IMR-90 (cell line): ENCODE measurements at regions of chr17 and their contacts with region 1.

Region 1: DNA sequence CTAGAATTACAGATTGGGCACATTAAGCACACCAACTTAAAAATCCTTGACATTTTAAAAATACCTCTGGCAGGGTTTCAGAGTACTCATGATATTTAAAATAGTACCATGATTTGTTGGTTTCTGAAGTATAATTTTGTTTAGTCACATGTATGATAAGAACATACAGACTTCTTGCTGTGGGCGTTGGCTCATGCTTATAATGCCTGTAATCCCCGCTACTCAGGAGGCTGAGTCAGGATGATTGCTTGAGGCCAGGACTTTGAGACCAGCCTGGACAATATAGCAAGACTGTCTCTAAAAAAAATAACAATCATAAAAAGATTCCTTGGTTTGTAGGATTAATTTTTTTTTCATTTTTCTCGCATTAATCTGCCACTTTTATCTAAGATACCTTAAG is 78.5 kb downstream of the NOS2 start:
- DNase-seq: no peak
- ATAC-seq: no peak
- H3K4me3 ChIP-seq: no peak overlapping the region
- H3K27ac ChIP-seq: no peak overlapping the region
- H3K4me1 ChIP-seq: no peaks in the 10 kb centered on the region
- H3K27me3 ChIP-seq: no peaks in the 10 kb centered on the region
- CTCF ChIP-seq: no peak
- POLR2A ChIP-seq: no peak
- RAD21 ChIP-seq: no peak

Region 2: DNA sequence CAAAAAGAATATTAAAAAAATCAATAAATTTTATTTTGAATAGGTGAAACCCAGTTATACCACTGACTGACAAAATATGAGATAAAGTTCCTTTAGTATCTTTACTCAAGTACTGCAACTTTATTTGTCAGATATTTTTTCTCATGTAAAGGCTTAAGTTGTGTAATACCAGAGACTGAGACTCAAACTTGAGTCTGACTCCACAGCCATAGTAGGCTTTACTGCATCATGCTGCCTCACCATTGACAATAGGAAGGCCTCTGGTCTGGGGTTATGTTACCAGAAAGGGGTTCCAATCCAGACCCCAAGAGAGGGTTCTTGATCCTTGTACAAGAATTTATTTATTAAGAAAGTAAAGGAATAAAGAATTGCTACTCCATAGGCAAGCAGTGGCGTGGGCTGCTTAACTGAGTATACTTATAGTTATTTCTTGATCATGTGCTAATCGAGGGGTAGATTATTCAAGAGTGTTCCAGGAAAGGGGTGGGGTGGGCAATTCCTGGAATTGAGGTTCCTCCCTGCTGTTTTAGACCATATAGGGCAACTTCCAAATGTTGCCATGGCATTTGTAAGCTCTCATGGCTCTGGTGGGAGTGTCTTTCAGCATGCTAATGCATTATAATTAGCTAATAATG is 615.3 kb before region 1 on chr17:
- CTCF ChIA-PET with region 1: no interaction called
- POLR2A ChIA-PET with region 1: no interaction called
- dilution Hi-C with region 1: no loop called
- in situ Hi-C with region 1: loop called (anchors 25 kb)
- intact Hi-C with region 1: no loop called
- DNase-seq: no peak
- ATAC-seq: no peak
- H3K4me3 ChIP-seq: no peak overlapping the region
- H3K27ac ChIP-seq: no peak overlapping the region
- H3K4me1 ChIP-seq: no peaks in the 10 kb centered on the region
- H3K27me3 ChIP-seq: no peaks in the 10 kb centered on the region
- CTCF ChIP-seq: no peak
- POLR2A ChIP-seq: no peak
- RAD21 ChIP-seq: no peak

Region 3: GRCh38 chr17:27741361-27741861 is 19.6 kb after region 1 on chr17:
- CTCF ChIA-PET with region 1: no interaction called
- POLR2A ChIA-PET with region 1: no interaction called
- dilution Hi-C with region 1: no loop called
- in situ Hi-C with region 1: no loop called
- intact Hi-C with region 1: no loop called
- DNase-seq: peak; percentile 10
- ATAC-seq: peak; percentile 57
- H3K4me3 ChIP-seq: no peak overlapping the region
- H3K27ac ChIP-seq: no peak overlapping the region
- H3K4me1 ChIP-seq: no peaks in the 10 kb centered on the region
- H3K27me3 ChIP-seq: peaks cover 1% of the 10 kb centered on the region
- CTCF ChIP-seq: no peak
- POLR2A ChIP-seq: no peak
- RAD21 ChIP-seq: no peak